ENCODE measurements at regions of chr3 and their contacts with region 1.

Region 1: GRCh38 chr3:23017780-23018179 is 185.3 kb upstream of the UBE2E2 start:
- DNase-seq: peak; percentile 68 to 92
- H3K4me3 ChIP-seq: no peak overlapping the region
- H3K27ac ChIP-seq: no peak overlapping the region
- H3K4me1 ChIP-seq: peaks cover 42% of the 10 kb centered on the region
- H3K27me3 ChIP-seq: no peaks in the 10 kb centered on the region
- CTCF ChIP-seq: no peak

Region 2: DNA sequence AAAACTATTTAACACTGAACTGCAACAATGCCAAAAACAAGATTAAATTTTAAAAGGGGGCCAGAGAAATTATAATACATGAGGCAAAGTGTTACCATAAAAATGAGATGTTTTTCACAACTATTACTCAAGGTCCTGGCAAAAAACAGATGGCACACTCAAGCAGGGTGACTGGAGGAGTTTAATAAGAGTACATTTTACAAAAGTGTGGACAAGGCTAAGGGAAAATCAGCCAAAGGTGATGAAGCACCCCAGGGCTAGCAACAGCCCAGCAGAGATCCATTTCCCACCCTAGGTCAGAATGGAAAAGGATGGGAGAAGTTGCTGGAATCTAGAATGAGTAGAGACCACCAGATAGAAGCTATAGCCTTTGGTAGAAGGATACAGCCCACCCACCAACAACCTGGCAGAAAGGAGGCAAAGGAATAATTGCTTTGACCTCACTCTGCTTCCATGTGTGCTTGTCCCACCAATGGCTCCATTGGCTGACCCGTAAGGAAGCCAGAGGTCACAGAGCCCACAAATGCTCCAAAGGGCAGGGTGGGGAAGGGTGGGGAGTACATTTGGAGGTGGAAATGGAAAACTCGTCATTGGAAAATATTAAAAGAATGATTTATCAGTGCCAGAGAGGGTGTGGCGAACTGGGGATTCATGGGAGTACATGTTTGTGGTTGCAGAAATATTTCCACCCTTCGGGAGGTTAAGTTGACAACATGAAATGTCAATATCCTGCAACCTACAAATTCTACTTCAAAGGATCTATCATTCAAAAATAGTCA is 24.3 kb after region 1 on chr3:
- CTCF ChIA-PET with region 1: no interaction called
- POLR2A ChIA-PET with region 1: no interaction called
- intact Hi-C with region 1: loop called (anchors 1 kb)
- DNase-seq: peak; percentile 43 to 48
- H3K4me3 ChIP-seq: no peak overlapping the region
- H3K27ac ChIP-seq: no peak overlapping the region
- H3K4me1 ChIP-seq: peaks cover 13% of the 10 kb centered on the region; the same call in 1 of the 2 replicates
- H3K27me3 ChIP-seq: no peaks in the 10 kb centered on the region
- CTCF ChIP-seq: no peak

Region 3: GRCh38 chr3:23095017-23095416 is 77.2 kb after region 1 on chr3:
- CTCF ChIA-PET with region 1: no interaction called
- POLR2A ChIA-PET with region 1: no interaction called
- intact Hi-C with region 1: loop called (anchors 1 kb)
- DNase-seq: peak; percentile 56 to 87
- H3K4me3 ChIP-seq: no peak overlapping the region
- H3K27ac ChIP-seq: no peak overlapping the region
- H3K4me1 ChIP-seq: peaks cover 12% of the 10 kb centered on the region; the same call in 1 of the 2 replicates
- H3K27me3 ChIP-seq: peaks cover 3% of the 10 kb centered on the region; the same call in 1 of the 2 replicates
- CTCF ChIP-seq: no peak

Region 4: GRCh38 chr3:23129817-23130216 is 112.0 kb after region 1 on chr3:
- CTCF ChIA-PET with region 1: no interaction called
- POLR2A ChIA-PET with region 1: no interaction called
- intact Hi-C with region 1: loop called (anchors 2 kb)
- DNase-seq: peak; percentile 73 to 89
- H3K4me3 ChIP-seq: peak overlapping the region; percentile 45; the same call in 1 of the 2 replicates
- H3K27ac ChIP-seq: peak overlapping the region; percentile 2; the same call in 1 of the 2 replicates
- H3K4me1 ChIP-seq: peaks cover 25% of the 10 kb centered on the region
- H3K27me3 ChIP-seq: peaks cover 24% of the 10 kb centered on the region; the same call in 1 of the 2 replicates
- CTCF ChIP-seq: no peak

Region 5: GRCh38 chr3:23202921-23203707 is 185.3 kb after region 1 on chr3 and contains the start of gene UBE2E2:
- CTCF ChIA-PET with region 1: no interaction called
- POLR2A ChIA-PET with region 1: no interaction called
- intact Hi-C with region 1: loop called (anchors 5 kb)
- DNase-seq: peak in 1 of 2 experiments; percentile 74
- H3K4me3 ChIP-seq: peak within 1 kb of the TSS; percentile 95
- H3K27ac ChIP-seq: 0 out of 2 replicates have a peak within 1 kb of the TSS, but pooled peaks have one; percentile 17
- H3K4me1 ChIP-seq: peaks cover 22% of the 10 kb centered on the region
- H3K27me3 ChIP-seq: peaks cover 8% of the 10 kb centered on the region; the same call in 1 of the 2 replicates
- CTCF ChIP-seq: no peak
- total RNA-seq, gene UBE2E2: 45.0 and 48.7 TPM in 2 replicates

Measured in PC-9 (cell line).